CD4-positive, alpha-beta memory T cell (primary cell): ENCODE measurements at regions of chr12 and their contacts with region 1.

Region 1: DNA sequence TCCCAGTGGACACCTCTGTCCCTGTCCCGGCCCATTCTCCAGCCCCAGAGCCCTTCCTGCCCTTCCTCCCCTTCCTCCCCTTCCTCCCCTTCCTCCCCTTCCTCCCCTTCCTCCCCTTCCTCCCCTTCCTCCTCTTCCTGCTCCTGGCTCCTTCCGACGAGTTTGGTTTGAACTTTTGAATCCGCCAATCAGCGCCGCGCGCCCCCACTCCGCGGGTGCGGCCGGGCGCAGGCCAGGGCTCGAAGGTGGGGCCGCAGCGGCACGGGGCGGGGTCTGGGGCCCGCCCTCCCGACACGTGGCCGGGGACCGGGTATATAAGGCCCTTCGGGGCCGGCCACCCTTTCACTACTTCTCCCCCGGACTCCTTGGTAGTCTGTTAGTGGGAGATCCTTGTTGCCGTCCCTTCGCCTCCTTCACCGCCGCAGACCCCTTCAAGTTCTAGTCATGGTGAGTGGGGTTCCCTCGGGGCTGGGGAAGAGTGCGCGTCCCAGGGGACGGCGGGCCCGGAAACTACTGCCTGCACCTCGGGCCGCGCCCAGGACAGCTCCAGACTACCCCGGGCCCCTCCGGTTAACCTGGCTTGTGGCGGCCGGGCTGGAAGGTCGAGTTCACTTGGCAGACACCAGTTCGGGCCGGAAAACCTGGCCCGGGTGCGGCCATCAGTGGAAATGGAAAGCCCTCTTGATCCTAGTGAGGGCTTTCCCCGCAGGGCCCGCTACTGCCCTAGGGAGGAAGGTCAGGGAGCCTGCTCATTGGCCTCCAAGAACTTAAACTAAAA is at the start of gene TUBA1C:
- DNase-seq: peak; percentile 80 to 84 (median 82)
- H3K4me3 ChIP-seq: peak within 1 kb of the TSS; percentile 65 to 96
- H3K4me3 Mint-ChIP-seq: peak within 1 kb of the TSS; percentile 90 to 99 (median 96)
- H3K27ac ChIP-seq: peak within 1 kb of the TSS; percentile 74
- H3K27ac Mint-ChIP-seq: peak within 1 kb of the TSS; percentile 92 to 98 (median 94)
- H3K4me1 ChIP-seq: peaks cover 36% of the 10 kb centered on the region
- H3K4me1 Mint-ChIP-seq: peaks cover 8 to 42% (median 23%) of the 10 kb centered on the region in 4 donors
- H3K27me3 ChIP-seq: no peaks in the 10 kb centered on the region
- H3K27me3 Mint-ChIP-seq: no peaks in the 10 kb centered on the region
- total RNA-seq, gene TUBA1C: 50.6 to 51.2 TPM

Region 2: DNA sequence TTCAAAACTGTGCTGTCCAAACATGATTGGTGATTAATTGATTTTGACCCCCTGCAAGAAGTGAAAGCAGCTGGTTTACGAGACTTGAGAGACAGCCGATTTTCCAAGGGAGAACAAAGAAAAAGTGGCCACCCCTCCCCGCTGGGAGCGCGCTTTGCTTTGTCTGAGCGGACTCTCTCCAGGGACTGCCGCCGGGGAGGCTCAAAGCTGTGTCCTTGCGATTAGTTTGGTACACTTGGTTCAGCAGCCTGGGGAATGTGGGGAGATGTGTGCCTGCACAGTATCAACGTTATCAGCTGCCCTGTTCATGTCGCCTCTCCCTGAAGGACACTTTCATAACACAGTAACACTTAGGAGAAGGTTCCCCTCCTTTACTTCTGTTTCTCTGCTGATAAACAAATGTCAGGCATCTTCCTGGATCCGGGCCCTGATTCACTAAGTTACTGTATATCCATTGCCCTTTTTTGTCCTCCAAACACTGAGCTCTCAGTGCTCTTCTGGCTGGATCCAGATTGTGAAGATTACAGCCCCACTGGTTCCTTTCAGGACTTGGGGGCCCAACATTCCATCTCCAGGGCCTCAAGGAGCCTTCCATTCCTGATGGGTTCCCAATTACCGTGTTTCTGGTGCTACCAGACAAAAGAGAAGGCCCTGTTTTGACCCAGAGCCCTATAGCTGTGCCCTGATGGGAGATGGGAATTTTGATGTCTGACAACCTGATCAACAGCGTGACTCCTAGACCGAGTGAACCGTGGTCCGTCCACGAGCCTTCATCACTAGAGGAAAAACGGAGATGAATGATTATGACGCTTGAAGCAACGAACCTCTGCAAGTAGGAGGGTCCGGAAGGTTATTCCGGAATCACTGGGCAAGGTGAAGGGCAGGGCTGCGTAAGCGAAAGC is 31.7 kb before region 1 on chr12:
- CTCF ChIA-PET with region 1: interaction called, 10 read pairs
- POLR2A ChIA-PET with region 1: interaction called, 3 read pairs
- intact Hi-C with region 1: loop called (anchors 1 kb)
- DNase-seq: no peak
- H3K4me3 ChIP-seq: no peak overlapping the region
- H3K4me3 Mint-ChIP-seq: peak overlapping the region; percentile 21 to 61 (median 53)
- H3K27ac ChIP-seq: no peak overlapping the region
- H3K27ac Mint-ChIP-seq: peak overlapping the region in 6 of 7 donors; percentile 33 to 81 (median 54)
- H3K4me1 ChIP-seq: no peaks in the 10 kb centered on the region
- H3K4me1 Mint-ChIP-seq: peaks cover 0 to 13% (median 6%) of the 10 kb centered on the region in 4 donors
- H3K27me3 ChIP-seq: no peaks in the 10 kb centered on the region
- H3K27me3 Mint-ChIP-seq: no peaks in the 10 kb centered on the region

Region 3: GRCh38 chr12:49276304-49277014 is 11.5 kb after region 1 on chr12:
- CTCF ChIA-PET with region 1: no interaction called
- POLR2A ChIA-PET with region 1: no interaction called
- intact Hi-C with region 1: no loop called
- DNase-seq: no peak
- H3K4me3 ChIP-seq: no peak overlapping the region
- H3K4me3 Mint-ChIP-seq: no peak overlapping the region
- H3K27ac ChIP-seq: no peak overlapping the region
- H3K27ac Mint-ChIP-seq: no peak overlapping the region
- H3K4me1 ChIP-seq: no peaks in the 10 kb centered on the region
- H3K4me1 Mint-ChIP-seq: no peaks in the 10 kb centered on the region
- H3K27me3 ChIP-seq: no peaks in the 10 kb centered on the region
- H3K27me3 Mint-ChIP-seq: peaks cover 0 to 3% of the 10 kb centered on the region in 2 donors